ENCODE measurements at regions of chr16 and their contacts with region 1.

Region 1: GRCh38 chr16:10944249-10945064 is at the start of gene CLEC16A:
- DNase-seq: peak; percentile 95
- H3K4me3 Mint-ChIP-seq: peak within 1 kb of the TSS; percentile 94
- H3K27ac Mint-ChIP-seq: peak within 1 kb of the TSS; percentile 66
- H3K4me1 Mint-ChIP-seq: peaks cover 56% of the 10 kb centered on the region
- H3K27me3 Mint-ChIP-seq: no peaks in the 10 kb centered on the region
- CTCF ChIP-seq: no peak
- total RNA-seq, gene CLEC16A: 29.1 and 32.4 TPM in 2 replicates

Region 2: DNA sequence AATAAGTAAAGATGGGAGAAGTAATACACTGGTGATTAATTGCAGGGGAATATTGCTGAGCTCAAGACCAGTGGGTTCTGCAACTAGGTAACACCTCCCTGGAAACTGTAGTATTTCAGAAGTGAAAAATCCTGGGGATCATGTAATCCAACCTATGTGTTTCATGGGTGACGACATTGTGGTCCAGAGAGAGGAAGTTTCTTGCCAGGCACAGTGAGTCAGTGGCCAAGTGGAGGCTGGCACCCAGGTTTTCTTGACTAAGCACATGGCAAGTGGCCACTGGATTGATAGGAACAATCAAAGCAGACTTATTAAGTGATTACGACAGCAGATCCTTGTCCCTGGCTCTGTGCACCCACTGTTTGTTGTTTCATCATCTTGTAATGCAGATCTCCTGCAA is 82.0 kb before region 1 on chr16:
- CTCF ChIA-PET with region 1: no interaction called
- POLR2A ChIA-PET with region 1: interaction called, 3 read pairs
- intact Hi-C with region 1: loop called (anchors 5 kb)
- DNase-seq: peak; percentile 99
- H3K4me3 Mint-ChIP-seq: no peak overlapping the region
- H3K27ac Mint-ChIP-seq: no peak overlapping the region
- H3K4me1 Mint-ChIP-seq: peaks cover 41% of the 10 kb centered on the region
- H3K27me3 Mint-ChIP-seq: no peaks in the 10 kb centered on the region
- CTCF ChIP-seq: no peak

Measured in MCF 10A (cell line).